ENCODE measurements at regions of chr7 and their contacts with region 1.

Region 1: DNA sequence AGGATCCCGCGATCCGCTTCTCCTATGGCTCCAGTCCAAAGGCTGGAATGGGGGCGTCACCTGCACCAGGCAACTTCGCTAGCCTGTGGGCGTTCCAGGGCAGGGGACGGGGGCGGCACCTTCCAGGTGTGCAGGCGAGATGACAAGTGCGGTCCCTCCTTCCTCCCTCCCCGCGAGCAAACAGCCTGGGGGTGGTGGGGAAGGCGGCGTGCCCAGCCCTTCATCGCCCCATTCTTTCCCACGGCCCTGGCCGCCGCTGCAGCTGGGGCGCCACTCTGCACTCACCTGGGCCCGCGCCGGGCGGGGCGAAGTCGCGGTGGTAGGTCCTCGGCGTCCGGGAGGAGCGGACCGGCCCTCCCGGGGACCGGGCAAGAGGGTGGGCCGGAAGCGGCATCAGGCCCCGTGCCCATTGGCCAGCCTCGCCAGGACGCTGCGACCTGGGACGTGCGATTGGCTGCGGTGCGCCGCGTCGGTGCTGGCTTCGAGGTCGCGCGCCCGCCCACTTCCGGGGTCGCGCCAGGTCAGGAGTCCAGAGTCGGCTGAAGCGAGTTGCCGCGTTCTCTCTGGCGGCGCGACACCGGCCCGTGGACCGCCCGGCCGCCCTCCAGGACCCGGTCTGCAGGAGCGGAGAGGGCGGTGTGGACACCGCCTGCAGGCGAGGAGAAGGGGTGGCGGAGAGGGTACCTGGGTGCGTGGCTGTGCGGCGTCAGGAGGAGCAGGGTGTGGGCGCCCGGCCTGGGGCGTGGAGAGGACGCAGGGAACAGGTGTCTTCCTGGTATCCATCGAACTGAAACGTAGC is at the start of gene TECPR1:
- DNase-seq: peak; percentile 91
- H3K4me3 Mint-ChIP-seq: peak within 1 kb of the TSS; percentile 98
- H3K27ac Mint-ChIP-seq: peak within 1 kb of the TSS; percentile 99
- H3K4me1 Mint-ChIP-seq: peaks cover 44% of the 10 kb centered on the region
- H3K27me3 Mint-ChIP-seq: no peaks in the 10 kb centered on the region
- total RNA-seq, gene TECPR1: 49.1 and 53.6 TPM in 2 replicates

Region 2: GRCh38 chr7:97872025-97872669 is 379.9 kb before region 1 on chr7 and contains the start of gene ASNS:
- intact Hi-C with region 1: loop called (anchors 1 kb)
- DNase-seq: peak; percentile 86
- H3K4me3 Mint-ChIP-seq: peak within 1 kb of the TSS; percentile 90
- H3K27ac Mint-ChIP-seq: peak within 1 kb of the TSS; percentile 86
- H3K4me1 Mint-ChIP-seq: peaks cover 20% of the 10 kb centered on the region
- H3K27me3 Mint-ChIP-seq: no peaks in the 10 kb centered on the region
- total RNA-seq, gene ASNS: 71.1 and 79.6 TPM in 2 replicates

Region 3: DNA sequence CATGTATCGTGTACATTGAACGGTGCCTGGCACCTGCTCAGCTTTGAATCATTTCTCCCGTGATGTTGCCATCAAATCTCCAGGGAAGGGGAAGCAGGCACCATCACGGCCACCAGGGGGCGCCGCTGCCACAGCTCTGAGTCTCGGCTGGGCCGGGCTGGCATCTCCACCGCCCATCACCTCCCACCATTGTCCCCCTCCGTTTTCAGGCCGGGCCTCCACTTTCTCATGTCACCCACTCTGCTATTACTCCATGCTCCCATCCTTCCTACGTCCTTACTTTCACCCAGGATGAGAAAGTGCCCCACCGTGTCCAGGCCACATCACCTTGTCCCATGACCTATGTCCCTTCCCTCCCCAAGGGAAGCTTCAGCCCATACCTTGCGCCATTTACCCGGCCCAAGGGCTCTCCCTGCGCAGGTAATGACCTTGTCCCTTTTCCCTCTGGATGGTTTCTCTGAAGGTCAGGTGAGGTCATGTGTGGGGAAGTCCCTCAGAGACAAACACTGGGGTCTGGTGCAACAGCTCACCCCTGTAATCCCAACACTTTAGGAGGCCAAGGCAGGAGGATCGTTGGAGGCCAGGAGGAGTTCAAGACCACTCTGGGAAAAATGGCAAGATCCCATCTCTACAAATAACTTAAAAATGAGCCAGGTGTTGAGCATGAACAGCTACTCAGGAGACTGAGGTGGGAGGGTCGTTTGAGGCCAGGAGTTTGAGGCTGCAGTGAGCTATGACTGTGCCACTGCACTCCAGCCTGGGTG is 230.3 kb before region 1 on chr7:
- intact Hi-C with region 1: loop called (anchors 2 kb)
- DNase-seq: peak; percentile 65
- H3K4me3 Mint-ChIP-seq: no peak overlapping the region
- H3K27ac Mint-ChIP-seq: no peak overlapping the region
- H3K4me1 Mint-ChIP-seq: peaks cover 6% of the 10 kb centered on the region
- H3K27me3 Mint-ChIP-seq: no peaks in the 10 kb centered on the region

Region 4: DNA sequence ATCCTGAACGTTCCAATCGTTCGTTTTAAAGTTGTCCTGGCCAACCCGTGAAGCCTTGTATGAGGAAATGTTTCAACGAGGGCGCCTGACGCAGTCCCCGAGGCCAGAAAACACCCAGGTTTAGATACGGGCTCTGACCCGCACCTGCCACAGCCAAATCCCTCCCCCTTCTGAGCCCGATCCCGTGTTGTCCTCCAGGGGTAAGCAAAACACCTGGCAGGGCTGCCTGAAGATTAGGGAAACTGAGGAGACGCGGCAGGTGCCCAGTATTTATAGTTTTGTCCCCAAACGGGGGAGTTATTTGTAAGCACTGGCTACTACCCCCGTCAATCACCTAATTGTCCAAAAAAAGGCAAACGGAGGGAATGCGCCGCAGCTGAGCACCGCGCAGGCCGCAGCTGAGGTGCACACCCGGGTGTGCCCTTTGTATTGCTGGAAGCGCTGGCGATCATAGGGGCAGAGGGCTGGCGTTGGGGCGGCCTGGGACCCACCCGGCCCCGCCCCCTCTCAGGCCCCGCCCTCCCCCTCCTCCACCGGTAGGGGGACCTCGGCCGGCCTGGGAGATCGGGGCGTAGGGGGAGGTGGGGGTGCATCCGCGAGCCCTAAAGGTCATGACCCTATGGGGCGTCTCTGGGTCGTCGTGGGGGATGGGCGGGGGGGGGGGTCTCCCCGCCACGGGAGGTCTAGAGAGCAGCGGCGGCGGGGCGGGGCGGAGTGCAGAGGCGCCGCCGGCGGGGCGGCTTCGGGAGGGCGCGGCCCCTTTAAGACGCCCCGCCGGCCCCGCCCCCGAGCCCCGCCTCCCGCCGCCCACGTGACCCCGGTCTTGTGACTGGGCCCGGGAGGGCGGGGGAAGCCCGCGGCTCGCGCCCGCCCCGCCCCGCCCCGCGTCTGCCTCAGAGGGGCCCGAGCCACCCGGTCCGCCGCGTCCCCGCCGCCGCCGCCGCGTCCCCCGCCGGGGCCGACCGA is 29.0 kb after region 1 on chr7 and contains the start of gene BRI3:
- intact Hi-C with region 1: loop called (anchors 1 kb)
- DNase-seq: peak; percentile 75
- H3K4me3 Mint-ChIP-seq: peak within 1 kb of the TSS; percentile 88
- H3K27ac Mint-ChIP-seq: peak within 1 kb of the TSS; percentile 83
- H3K4me1 Mint-ChIP-seq: peaks cover 16% of the 10 kb centered on the region
- H3K27me3 Mint-ChIP-seq: no peaks in the 10 kb centered on the region
- total RNA-seq, gene BRI3: 67.1 and 68.3 TPM in 2 replicates

Region 5: DNA sequence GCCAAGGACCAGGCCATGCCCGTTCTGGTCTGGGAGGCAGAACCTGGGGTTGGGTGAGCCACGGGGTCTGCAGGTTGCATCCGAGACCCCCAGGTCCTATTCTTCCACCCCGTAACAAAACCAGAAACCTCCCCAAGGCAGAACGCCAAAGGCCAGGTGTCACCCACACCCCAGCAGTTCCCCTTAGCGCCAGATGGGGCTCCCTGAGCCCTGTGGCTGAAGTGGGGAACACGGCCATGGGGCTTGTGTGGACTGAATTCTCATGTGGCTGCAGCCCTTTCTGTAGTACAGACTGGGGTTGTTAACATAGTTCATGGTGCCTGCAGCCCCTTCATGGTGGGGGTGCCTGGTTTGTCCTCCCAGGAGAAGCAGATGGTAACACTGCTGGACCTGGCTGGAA is 39.7 kb after region 1 on chr7:
- intact Hi-C with region 1: no loop called
- DNase-seq: no peak
- H3K4me3 Mint-ChIP-seq: no peak overlapping the region
- H3K27ac Mint-ChIP-seq: no peak overlapping the region
- H3K4me1 Mint-ChIP-seq: no peaks in the 10 kb centered on the region
- H3K27me3 Mint-ChIP-seq: no peaks in the 10 kb centered on the region

Region 6: GRCh38 chr7:98334081-98334480 is 82.0 kb after region 1 on chr7:
- intact Hi-C with region 1: no loop called
- DNase-seq: no peak
- H3K4me3 Mint-ChIP-seq: no peak overlapping the region
- H3K27ac Mint-ChIP-seq: no peak overlapping the region
- H3K4me1 Mint-ChIP-seq: no peaks in the 10 kb centered on the region
- H3K27me3 Mint-ChIP-seq: no peaks in the 10 kb centered on the region

Region 7: DNA sequence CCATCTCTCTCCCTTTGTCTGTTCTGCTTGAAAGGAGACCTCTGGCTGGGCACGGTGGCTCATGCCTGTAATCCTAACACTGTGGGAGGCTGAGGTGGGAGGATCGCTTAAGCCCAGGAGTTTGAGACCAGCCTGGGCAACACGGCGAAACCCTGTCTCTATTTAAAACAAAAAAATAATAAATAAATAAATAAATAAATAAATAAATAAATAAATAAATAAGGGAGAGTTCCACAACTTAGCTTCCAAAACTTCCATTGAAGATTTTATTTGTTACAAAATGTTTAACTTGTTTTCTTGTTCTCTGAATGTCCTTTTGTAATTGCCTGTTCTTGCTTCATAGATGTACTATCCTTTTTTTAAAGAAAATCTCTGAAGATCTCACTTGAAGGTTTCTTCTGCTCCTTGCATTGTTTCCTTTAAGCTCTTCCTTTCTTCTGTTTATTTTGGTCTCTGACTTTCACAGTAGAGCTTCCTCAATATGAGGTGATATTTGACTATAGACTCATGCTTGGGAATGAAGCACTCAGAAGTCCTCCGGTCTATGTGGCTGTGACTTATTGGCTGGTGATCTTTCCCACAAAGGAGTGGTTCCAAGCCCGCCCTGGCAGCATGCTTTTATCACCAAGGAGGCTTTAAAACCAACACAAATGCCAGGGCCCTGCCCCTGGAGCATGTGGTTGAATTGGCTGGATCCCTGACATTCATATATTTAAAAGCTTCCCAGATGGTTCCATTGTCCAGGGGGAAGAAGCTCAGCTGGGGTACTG is 347.0 kb after region 1 on chr7:
- intact Hi-C with region 1: no loop called
- DNase-seq: no peak
- H3K4me3 Mint-ChIP-seq: no peak overlapping the region
- H3K27ac Mint-ChIP-seq: no peak overlapping the region
- H3K4me1 Mint-ChIP-seq: no peaks in the 10 kb centered on the region
- H3K27me3 Mint-ChIP-seq: no peaks in the 10 kb centered on the region

Region 8: GRCh38 chr7:98878365-98879165 is 626.5 kb after region 1 on chr7 and contains the start of gene TRRAP:
- intact Hi-C with region 1: loop called (anchors 2 kb)
- DNase-seq: peak; percentile 70
- H3K4me3 Mint-ChIP-seq: peak within 1 kb of the TSS; percentile 95
- H3K27ac Mint-ChIP-seq: peak within 1 kb of the TSS; percentile 92
- H3K4me1 Mint-ChIP-seq: peaks cover 13% of the 10 kb centered on the region
- H3K27me3 Mint-ChIP-seq: peaks cover 10% of the 10 kb centered on the region
- total RNA-seq, gene TRRAP: 66.9 and 69.6 TPM in 2 replicates

Measured in activated T-helper 1 cell treated with anti-CD3 and anti-CD28 coated beads, Interleukin-12 subunit alpha, Interleukin-12 subunit beta, Interleukin-2, Interleukin-4 antibody, amounts not matched to agents 30 ng/mL and 10 ng/mL and 1 ng/mL, durations not matched to agents 14 hours and 24 hours and 36 hours (primary cell).